ENCODE measurements at regions of chr14 and their contacts with region 1.

Region 1: DNA sequence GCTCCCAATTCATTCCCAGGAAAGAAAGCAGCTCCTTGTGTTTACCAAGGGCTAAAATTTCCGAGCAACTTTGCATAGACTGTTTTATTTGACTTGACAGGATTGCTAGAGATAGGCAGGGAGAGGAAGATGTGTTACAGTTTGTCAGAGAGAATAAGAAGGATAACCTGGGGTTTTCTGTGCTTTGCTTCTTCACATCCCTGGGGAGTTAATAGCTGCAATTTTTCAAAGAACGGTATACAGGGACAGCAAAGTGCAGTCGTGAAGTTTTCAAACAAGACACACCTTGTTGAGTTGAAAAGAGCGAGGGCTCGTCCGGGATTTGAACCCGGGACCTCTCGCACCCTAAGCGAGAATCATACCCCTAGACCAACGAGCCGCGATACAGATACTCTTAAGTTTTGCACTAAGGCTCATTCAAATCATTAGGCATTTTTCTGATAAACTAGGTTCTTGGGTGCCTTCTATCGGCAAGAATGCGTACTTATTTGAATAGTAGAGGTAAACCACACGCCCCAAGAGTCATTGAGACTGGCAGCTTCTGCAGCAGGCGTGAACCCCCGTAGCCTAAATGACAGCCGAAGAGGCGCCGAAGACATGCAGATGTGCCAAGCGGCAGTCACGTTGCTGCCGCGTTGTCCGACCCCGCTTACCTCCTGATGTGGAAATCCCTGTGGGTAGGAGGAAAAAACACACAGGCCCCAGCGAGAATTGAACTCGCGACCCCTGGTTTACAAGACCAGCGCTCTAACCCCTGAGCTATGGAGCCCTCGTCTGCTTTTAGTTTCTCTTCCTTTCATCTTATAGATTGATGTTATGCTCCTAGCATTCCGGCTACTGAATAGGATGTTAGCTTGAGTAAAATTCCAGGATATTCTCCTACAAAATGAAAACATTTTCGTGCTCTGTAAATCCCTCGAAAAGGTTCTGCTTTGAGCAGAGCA is 22.2 kb upstream of the RNASE12 start:
- DNase-seq: peak; percentile 99
- H3K4me3 ChIP-seq: peak overlapping the region; percentile 52
- H3K27ac ChIP-seq: peak overlapping the region; percentile 45
- H3K4me1 ChIP-seq: peaks cover 14% of the 10 kb centered on the region
- H3K27me3 ChIP-seq: no peaks in the 10 kb centered on the region
- CTCF ChIP-seq: peak; percentile 77

Region 2: DNA sequence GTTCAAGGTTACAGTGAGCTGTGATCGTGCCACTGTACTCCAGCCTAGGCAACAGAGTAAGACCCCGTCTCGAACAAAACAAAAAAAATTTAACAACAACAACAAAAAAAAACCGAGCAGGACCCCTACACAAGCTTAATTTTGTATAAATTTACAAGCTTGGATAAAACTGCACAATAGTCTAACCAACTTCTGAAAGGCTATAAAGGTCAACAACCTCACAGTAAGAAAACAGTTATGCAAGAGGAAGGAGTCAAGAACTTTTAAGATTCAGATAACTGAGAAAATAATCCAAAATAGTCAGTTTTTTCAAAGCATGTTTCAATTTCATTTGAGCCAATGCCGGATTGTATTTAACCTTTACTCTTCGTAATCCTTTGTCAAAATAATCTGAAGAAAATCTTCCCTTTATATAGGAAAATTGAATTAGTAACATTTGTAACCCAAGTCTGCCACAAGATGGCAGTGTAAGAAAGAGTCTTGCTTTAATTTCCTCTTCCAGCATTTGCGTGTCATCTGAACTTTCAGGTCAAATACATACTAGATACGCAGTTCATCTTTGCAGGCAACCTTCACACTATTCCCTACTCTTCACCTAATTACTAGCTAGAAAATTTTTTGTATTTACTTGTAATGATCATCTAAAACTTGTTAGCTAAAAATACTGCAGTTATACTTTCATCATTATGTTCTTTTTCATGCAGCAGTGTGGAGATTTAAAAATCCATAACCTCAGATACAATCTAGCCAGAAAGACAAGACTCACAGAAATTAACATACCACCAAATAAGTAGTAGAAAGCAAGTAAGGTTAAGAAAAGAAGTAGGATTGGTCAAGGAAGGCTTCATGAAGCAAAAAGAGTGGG is 286.1 kb before region 1 on chr14:
- CTCF ChIA-PET with region 1: interaction called, 4 read pairs
- POLR2A ChIA-PET with region 1: no interaction called
- intact Hi-C with region 1: loop called (anchors 1 kb)
- DNase-seq: peak; percentile 76
- H3K4me3 ChIP-seq: peak overlapping the region; percentile 2
- H3K27ac ChIP-seq: peak overlapping the region; percentile 60
- H3K4me1 ChIP-seq: peaks cover 23% of the 10 kb centered on the region
- H3K27me3 ChIP-seq: no peaks in the 10 kb centered on the region
- CTCF ChIP-seq: peak; percentile 74

Region 3: DNA sequence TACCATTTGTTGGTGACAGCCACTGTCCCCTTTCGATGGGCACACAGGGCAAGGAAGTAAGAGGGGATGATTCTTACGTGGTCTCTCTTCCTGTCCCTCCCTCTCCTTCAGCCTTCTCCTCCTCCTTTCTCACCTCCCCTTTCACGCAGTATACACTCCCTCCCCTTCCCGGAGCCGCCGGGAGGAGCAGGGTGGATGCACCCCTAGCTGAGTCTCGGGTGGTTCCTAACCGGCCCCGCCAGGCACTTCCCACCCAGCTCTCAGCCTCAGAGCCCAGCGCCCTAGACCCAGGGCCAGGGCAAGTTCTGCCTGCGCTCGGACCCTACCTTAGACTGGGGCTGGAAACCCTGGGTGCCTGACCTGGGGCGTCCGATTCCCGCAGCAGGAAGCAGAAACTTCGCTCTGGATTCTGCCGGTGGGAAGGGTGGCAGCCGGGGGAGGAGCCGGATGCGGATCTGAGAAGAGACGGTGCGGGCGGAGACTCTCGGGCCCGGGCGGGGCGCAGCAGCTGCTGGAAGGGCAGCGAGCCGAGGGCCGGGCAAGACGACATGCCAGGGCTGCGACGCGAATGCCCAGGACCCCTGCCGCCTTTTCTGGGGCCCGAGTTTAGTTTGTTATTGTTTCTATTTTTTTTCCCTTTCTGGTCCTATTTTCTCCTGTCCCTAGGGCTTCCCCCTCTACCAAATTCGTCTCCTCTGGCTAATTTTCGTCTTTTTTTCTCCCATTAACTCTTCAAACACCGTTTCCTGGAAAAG is 200.1 kb before region 1 on chr14 and contains the start of gene TEP1:
- CTCF ChIA-PET with region 1: interaction called, 3 read pairs
- POLR2A ChIA-PET with region 1: no interaction called
- intact Hi-C with region 1: loop called (anchors 2 kb)
- DNase-seq: peak; percentile 89
- H3K4me3 ChIP-seq: peak within 1 kb of the TSS; percentile 78
- H3K27ac ChIP-seq: peak within 1 kb of the TSS; percentile 85
- H3K4me1 ChIP-seq: peaks cover 13% of the 10 kb centered on the region
- H3K27me3 ChIP-seq: no peaks in the 10 kb centered on the region
- CTCF ChIP-seq: no peak
- total RNA-seq, gene TEP1: 12.3 and 15.9 TPM in 2 replicates

Region 4: GRCh38 chr14:20454516-20455354 is 158.6 kb before region 1 on chr14 and contains the starts of genes APEX1 and OSGEP:
- CTCF ChIA-PET with region 1: no interaction called
- POLR2A ChIA-PET with region 1: no interaction called
- intact Hi-C with region 1: loop called (anchors 5 kb)
- DNase-seq: peak; percentile 99
- H3K4me3 ChIP-seq: peak within 1 kb of the TSS; percentile 82
- H3K27ac ChIP-seq: peak within 1 kb of the TSS; percentile 96
- H3K4me1 ChIP-seq: peaks cover 9% of the 10 kb centered on the region
- H3K27me3 ChIP-seq: no peaks in the 10 kb centered on the region
- CTCF ChIP-seq: no peak
- total RNA-seq, gene APEX1: 277 and 299 TPM in 2 replicates
- total RNA-seq, gene OSGEP: 59.2 and 67.8 TPM in 2 replicates

Region 5: GRCh38 chr14:20530771-20531571 is 82.4 kb before region 1 on chr14:
- CTCF ChIA-PET with region 1: interaction called, 10 read pairs
- POLR2A ChIA-PET with region 1: no interaction called
- intact Hi-C with region 1: loop called (anchors 1 kb)
- DNase-seq: peak; percentile 85
- H3K4me3 ChIP-seq: no peak overlapping the region
- H3K27ac ChIP-seq: no peak overlapping the region
- H3K4me1 ChIP-seq: no peaks in the 10 kb centered on the region
- H3K27me3 ChIP-seq: peaks cover 16% of the 10 kb centered on the region
- CTCF ChIP-seq: peak; percentile 87

Region 6: GRCh38 chr14:20632682-20633428 is 19.5 kb after region 1 on chr14:
- CTCF ChIA-PET with region 1: no interaction called
- POLR2A ChIA-PET with region 1: no interaction called
- intact Hi-C with region 1: loop called (anchors 1 kb)
- DNase-seq: peak; percentile 96
- H3K4me3 ChIP-seq: peak overlapping the region; percentile 58
- H3K27ac ChIP-seq: no peak overlapping the region
- H3K4me1 ChIP-seq: peaks cover 7% of the 10 kb centered on the region
- H3K27me3 ChIP-seq: peaks cover 6% of the 10 kb centered on the region
- CTCF ChIP-seq: no peak

Measured in A673 (cell line).